ENCODE measurements at regions of chr17 and their contacts with region 1.

Region 1: GRCh38 chr17:40474419-40475002 is 26.9 kb downstream of the TNS4 start:
- DNase-seq: no peak
- H3K4me3 Mint-ChIP-seq: no peak overlapping the region
- H3K27ac Mint-ChIP-seq: no peak overlapping the region
- H3K4me1 Mint-ChIP-seq: peaks cover 11% of the 10 kb centered on the region
- H3K27me3 Mint-ChIP-seq: no peaks in the 10 kb centered on the region

Region 2: GRCh38 chr17:40417609-40418427 is 56.7 kb before region 1 on chr17 and contains the start of gene TOP2A:
- CTCF ChIA-PET with region 1: interaction called, 19 read pairs
- intact Hi-C with region 1: no loop called
- DNase-seq: peak; percentile 99
- H3K4me3 Mint-ChIP-seq: peak within 1 kb of the TSS; percentile 98
- H3K27ac Mint-ChIP-seq: peak within 1 kb of the TSS; percentile 90
- H3K4me1 Mint-ChIP-seq: peaks cover 26% of the 10 kb centered on the region
- H3K27me3 Mint-ChIP-seq: peaks cover 2% of the 10 kb centered on the region
- total RNA-seq, gene TOP2A: 410 to 416 TPM

Region 3: DNA sequence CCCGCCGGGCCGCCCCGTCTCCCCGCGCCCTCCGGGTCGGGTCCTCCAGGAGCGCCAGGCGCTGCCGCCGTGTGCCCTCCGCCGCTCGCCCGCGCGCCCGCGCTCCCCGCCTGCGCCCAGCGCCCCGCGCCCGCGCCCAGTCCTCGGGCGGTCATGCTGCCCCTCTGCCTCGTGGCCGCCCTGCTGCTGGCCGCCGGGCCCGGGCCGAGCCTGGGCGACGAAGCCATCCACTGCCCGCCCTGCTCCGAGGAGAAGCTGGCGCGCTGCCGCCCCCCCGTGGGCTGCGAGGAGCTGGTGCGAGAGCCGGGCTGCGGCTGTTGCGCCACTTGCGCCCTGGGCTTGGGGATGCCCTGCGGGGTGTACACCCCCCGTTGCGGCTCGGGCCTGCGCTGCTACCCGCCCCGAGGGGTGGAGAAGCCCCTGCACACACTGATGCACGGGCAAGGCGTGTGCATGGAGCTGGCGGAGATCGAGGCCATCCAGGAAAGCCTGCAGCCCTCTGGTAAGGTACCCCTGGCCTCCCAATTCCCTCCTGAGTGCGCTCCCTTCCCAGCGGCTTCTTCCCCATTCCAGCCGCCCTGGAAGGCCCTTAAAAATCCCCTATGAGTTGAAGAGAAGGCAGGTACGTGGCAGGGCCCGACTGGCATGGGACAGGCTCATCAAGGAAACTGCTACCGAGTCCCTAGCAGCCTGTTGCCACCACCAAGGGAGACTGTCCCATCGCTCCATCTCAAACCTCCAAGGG is 30.8 kb before region 1 on chr17:
- CTCF ChIA-PET with region 1: interaction called, 18 read pairs
- intact Hi-C with region 1: no loop called
- DNase-seq: peak; percentile 74
- H3K4me3 Mint-ChIP-seq: peak overlapping the region; percentile 78
- H3K27ac Mint-ChIP-seq: peak overlapping the region; percentile 76
- H3K4me1 Mint-ChIP-seq: peaks cover 29% of the 10 kb centered on the region
- H3K27me3 Mint-ChIP-seq: peaks cover 4% of the 10 kb centered on the region

Region 4: GRCh38 chr17:40457964-40458791 is 16.3 kb before region 1 on chr17:
- CTCF ChIA-PET with region 1: interaction called, 20 read pairs
- intact Hi-C with region 1: no loop called
- DNase-seq: no peak
- H3K4me3 Mint-ChIP-seq: no peak overlapping the region
- H3K27ac Mint-ChIP-seq: no peak overlapping the region
- H3K4me1 Mint-ChIP-seq: no peaks in the 10 kb centered on the region
- H3K27me3 Mint-ChIP-seq: no peaks in the 10 kb centered on the region

Region 5: DNA sequence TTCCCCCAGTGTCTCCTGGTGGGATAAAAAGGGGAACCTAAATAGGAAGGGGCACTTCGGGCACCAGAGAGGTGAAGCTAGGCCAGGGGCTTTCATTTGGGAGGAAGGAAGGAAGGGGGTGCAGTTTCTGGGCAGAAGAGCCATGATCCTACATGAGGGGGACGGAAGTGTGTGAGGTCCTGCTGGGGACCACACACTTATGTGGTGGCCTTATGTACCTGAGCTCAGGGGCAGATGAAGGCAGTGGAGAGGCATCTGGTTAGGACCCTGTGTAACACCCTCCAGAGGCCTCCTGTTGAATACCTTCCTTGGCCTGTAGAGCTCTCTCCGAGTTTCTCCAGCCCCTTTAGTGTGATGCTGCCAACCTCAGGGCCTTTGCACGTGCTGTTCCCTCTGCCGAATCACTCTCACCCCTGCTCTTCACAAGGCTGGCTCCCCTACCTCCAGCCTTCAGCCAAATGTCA is 10.1 kb before region 1 on chr17:
- CTCF ChIA-PET with region 1: interaction called, 15 read pairs
- intact Hi-C with region 1: no loop called
- DNase-seq: no peak
- H3K4me3 Mint-ChIP-seq: no peak overlapping the region
- H3K27ac Mint-ChIP-seq: no peak overlapping the region
- H3K4me1 Mint-ChIP-seq: no peaks in the 10 kb centered on the region
- H3K27me3 Mint-ChIP-seq: no peaks in the 10 kb centered on the region

Region 6: GRCh38 chr17:40497690-40498089 is 23.2 kb after region 1 on chr17:
- CTCF ChIA-PET with region 1: interaction called, 11 read pairs
- intact Hi-C with region 1: no loop called
- DNase-seq: no peak
- H3K4me3 Mint-ChIP-seq: no peak overlapping the region
- H3K27ac Mint-ChIP-seq: no peak overlapping the region
- H3K4me1 Mint-ChIP-seq: no peaks in the 10 kb centered on the region
- H3K27me3 Mint-ChIP-seq: no peaks in the 10 kb centered on the region

Region 7: GRCh38 chr17:40582328-40582901 is 107.9 kb after region 1 on chr17:
- CTCF ChIA-PET with region 1: no interaction called
- intact Hi-C with region 1: no loop called
- DNase-seq: peak; percentile 92
- H3K4me3 Mint-ChIP-seq: peak overlapping the region; percentile 45
- H3K27ac Mint-ChIP-seq: peak overlapping the region; percentile 71
- H3K4me1 Mint-ChIP-seq: peaks cover 86% of the 10 kb centered on the region
- H3K27me3 Mint-ChIP-seq: no peaks in the 10 kb centered on the region

Region 8: DNA sequence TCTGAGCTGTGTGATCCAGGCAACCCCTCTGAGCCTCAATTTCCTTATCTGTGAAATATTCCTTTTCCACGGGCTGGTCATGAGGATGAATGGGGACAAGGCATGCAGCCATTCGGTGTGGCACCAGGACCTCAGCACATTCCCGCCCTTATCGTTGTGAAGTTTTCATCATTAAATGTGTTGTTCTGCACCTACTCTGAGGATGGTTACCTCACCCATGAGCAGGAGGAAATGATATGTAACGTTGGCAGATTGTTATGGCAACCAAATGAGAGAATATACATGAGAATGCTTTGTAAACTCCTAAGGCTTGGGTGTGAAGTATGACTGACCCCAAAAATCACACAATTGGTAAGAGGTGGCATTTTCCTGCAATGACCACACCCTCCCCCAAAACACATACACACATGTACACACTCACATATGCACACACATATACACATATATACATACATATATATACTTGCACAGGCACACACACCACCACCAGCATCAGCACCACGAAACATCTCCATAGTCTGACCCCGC is 133.6 kb after region 1 on chr17:
- CTCF ChIA-PET with region 1: no interaction called
- intact Hi-C with region 1: no loop called
- DNase-seq: peak; percentile 64
- H3K4me3 Mint-ChIP-seq: peak overlapping the region; percentile 38
- H3K27ac Mint-ChIP-seq: peak overlapping the region; percentile 73
- H3K4me1 Mint-ChIP-seq: peaks cover 95% of the 10 kb centered on the region
- H3K27me3 Mint-ChIP-seq: no peaks in the 10 kb centered on the region

Measured in activated naive CD4-positive, alpha-beta T cell treated with anti-CD3 and anti-CD28 coated beads for 36 hours (primary cell).